Aorta (tissue), 5 donors: ENCODE measurements at regions of chr10 and their contacts with region 1.

Region 1: GRCh38 chr10:76681153-76681552 is 956.5 kb downstream of the KCNMA1 start:
- DNase-seq: no peak
- ATAC-seq: no peak
- H3K4me3 ChIP-seq: no peak overlapping the region
- H3K27ac ChIP-seq: peak overlapping the region in 1 of 2 donors; percentile 28
- H3K4me1 ChIP-seq: peaks cover 6 to 12% of the 10 kb centered on the region in 2 donors
- H3K27me3 ChIP-seq: no peaks in the 10 kb centered on the region

Region 2: DNA sequence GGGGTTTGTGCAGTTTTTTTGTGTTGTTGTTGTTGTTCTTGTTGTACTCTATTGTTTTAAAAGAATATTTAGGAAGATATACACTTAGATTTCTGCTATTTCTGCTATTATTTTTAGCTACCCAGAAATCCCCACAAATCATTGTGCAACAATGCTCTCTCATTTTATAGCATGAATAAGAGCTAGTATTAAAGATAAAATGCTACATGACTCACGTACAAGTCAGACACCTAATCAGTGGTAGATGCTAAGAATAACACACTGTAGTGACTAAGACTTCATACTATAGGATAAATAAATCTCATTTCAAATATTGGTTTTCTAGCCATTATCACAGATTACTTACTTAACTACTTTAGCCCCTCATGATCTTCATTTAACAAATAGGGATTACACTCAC is 36.0 kb after region 1 on chr10:
- intact Hi-C with region 1: loop called in 1 of 2 experiments (anchors 5 kb)
- DNase-seq: no peak
- ATAC-seq: no peak
- H3K4me3 ChIP-seq: no peak overlapping the region
- H3K27ac ChIP-seq: no peak overlapping the region
- H3K4me1 ChIP-seq: peaks cover 0 to 2% of the 10 kb centered on the region in 2 donors
- H3K27me3 ChIP-seq: no peaks in the 10 kb centered on the region